Endothelial cell of umbilical vein (primary cell): ENCODE measurements at regions of chr20 and their contacts with region 1.

Region 1: DNA sequence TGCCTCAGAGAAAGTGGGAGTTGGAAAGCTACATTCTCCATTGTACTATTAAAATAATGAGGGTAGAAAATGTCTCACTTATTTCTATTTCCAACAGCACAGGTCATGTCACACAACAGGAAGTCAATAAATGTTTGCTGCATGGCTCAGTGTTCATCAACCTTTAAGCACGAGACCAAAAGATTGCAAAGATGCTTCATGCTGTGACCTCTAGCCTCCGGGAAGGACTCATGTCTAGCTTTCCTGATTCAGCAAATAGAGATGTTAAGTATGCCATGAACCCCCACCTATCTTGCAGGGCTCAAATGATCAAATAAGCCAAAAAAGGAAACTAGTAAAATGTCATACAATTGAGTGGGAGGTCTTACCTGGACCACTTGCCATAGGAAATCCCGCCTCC is 57.4 kb downstream of the NCOA6 start:
- DNase-seq: peak; percentile 14
- H3K4me3 ChIP-seq: no peak overlapping the region
- H3K27ac ChIP-seq: no peak overlapping the region
- H3K4me1 ChIP-seq: peaks cover 12% of the 10 kb centered on the region
- H3K27me3 ChIP-seq: no peaks in the 10 kb centered on the region
- CTCF ChIP-seq: no peak
- POLR2A ChIP-seq: no peak

Region 2: DNA sequence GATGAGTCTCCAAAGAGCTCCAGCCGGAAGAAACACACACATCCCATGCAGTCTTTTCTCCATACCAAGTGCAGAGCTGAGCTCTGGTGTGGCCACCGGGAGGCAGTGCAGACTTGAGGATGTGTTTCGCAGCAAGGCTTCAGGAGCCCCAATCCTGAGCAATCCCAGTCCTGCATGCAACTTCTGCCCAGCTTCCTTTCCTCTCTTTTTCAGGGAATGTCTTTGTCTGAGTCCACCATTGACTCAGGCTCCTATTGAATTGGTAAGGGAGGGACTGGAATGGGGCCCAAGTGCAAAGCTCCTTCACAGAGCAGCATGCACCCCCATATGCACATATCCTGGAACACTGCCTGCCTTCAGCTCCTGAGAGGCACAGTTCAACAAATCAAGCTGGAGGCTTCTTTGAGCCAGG is 577.4 kb before region 1 on chr20:
- CTCF ChIA-PET with region 1: interaction called, 33 read pairs
- POLR2A ChIA-PET with region 1: no interaction called
- dilution Hi-C with region 1: no loop called
- intact Hi-C with region 1: loop called (anchors 10 kb)
- DNase-seq: peak; percentile 82
- H3K4me3 ChIP-seq: no peak overlapping the region
- H3K27ac ChIP-seq: no peak overlapping the region
- H3K4me1 ChIP-seq: no peaks in the 10 kb centered on the region
- H3K27me3 ChIP-seq: peaks cover 37 to 44% of the 10 kb centered on the region in 2 experiments
- CTCF ChIP-seq: peak; percentile 86 to 88
- POLR2A ChIP-seq: no peak

Region 3: GRCh38 chr20:34558320-34559218 is 209.5 kb before region 1 on chr20 and contains the start of gene MAP1LC3A:
- CTCF ChIA-PET with region 1: interaction called, 23 read pairs
- POLR2A ChIA-PET with region 1: no interaction called
- dilution Hi-C with region 1: no loop called
- intact Hi-C with region 1: loop called (anchors 1 kb)
- DNase-seq: peak; percentile 93
- H3K4me3 ChIP-seq: peak within 1 kb of the TSS; percentile 60 to 92 (median 73)
- H3K27ac ChIP-seq: peak within 1 kb of the TSS; percentile 77
- H3K4me1 ChIP-seq: no peaks in the 10 kb centered on the region
- H3K27me3 ChIP-seq: no peaks in the 10 kb centered on the region
- CTCF ChIP-seq: no peak
- POLR2A ChIP-seq: no peak
- total RNA-seq, gene MAP1LC3A: 32.1 and 32.7 TPM in 2 replicates

Region 4: DNA sequence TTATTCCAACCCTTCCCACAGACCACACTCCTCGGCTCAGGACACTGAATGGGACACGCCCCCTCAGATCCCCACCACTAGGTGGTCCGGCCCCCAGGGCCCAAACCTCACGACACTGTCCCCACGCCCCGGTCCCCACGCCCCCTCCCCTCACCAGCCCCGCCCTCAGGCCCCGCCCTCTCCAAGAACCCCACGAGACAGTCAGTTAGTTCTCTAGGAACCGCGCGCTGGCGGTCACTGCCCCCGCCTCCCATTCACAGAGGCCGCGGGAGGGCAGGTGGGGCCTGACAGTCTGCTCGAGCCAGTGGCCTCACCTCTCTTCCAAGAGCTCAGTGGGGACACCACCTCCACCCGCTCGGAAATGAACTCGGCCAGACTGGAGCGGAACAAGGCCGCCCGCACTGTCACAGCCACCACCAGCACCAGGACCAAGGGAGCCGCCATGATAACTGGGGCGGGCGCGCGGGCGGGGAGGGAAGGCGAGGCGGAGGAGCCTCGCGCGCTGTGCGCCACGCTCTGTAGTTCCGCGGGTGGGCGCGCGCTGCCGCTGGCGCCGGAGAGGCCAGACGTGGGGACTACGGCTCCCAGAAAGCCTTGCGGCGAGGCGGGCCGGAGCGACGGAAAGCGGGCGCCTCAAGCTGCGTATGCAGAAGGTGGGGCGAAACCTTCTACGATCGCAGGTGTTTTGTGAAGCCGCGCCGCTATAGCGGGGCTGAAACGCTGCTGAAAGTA is 91.3 kb before region 1 on chr20 and contains the start of gene PIGU:
- CTCF ChIA-PET with region 1: no interaction called
- POLR2A ChIA-PET with region 1: no interaction called
- dilution Hi-C with region 1: no loop called
- intact Hi-C with region 1: no loop called
- DNase-seq: peak; percentile 97
- H3K4me3 ChIP-seq: peak within 1 kb of the TSS; percentile 74 to 86 (median 79)
- H3K27ac ChIP-seq: peak within 1 kb of the TSS; percentile 25
- H3K4me1 ChIP-seq: peaks cover 4% of the 10 kb centered on the region
- H3K27me3 ChIP-seq: no peaks in the 10 kb centered on the region
- CTCF ChIP-seq: peak in 1 of 2 donors; percentile 18
- POLR2A ChIP-seq: peak; percentile 47
- total RNA-seq, gene PIGU: 20.3 and 23.3 TPM in 2 replicates

Region 5: DNA sequence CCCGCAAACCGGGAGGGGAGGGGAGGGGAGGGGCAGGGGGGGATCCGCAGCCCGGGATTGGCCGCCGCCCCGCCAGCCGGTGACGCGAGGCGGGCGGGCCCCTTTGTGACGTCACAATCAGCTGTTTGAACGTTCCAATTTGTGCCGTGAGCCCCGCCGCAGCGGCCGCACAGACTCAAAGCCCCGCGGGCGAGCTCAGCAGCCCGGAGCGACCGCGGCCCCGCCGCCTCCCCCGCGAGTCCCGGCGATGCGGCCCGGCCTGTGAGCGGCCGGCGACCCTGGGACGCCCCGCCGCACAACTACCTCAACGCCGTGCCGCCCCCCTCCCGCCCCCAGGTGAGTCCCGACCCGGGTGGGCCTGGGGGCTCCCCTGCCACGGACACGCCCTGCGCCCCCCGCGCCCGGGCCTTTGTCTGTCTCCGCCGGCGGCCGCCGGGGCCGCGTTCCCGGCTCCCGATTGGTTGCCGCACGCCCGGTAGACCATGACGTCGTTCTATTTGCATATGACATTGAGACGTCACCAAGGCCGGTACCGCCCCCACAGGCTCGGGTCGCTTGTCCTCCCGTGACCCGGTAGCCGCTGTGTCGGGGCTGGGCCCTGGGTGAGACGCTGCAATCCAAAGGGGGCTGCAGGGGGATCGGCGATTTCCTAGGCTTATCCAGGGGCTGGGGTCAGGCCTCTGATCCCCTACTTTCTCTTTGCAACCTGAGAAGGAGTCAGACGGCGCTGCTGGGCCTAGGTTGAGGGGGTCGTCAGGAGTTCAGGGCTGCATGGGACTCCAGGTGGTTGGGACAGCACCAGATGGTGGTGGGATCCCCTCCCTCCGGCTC is 63.7 kb before region 1 on chr20 and contains the start of gene TP53INP2:
- CTCF ChIA-PET with region 1: interaction called, 10 read pairs
- POLR2A ChIA-PET with region 1: no interaction called
- dilution Hi-C with region 1: no loop called
- intact Hi-C with region 1: no loop called
- DNase-seq: peak; percentile 81
- H3K4me3 ChIP-seq: peak within 1 kb of the TSS; percentile 50 to 79 (median 75)
- H3K27ac ChIP-seq: peak within 1 kb of the TSS; percentile 88
- H3K4me1 ChIP-seq: peaks cover 14% of the 10 kb centered on the region
- H3K27me3 ChIP-seq: no peaks in the 10 kb centered on the region
- CTCF ChIP-seq: no peak
- POLR2A ChIP-seq: peak; percentile 81
- total RNA-seq, gene TP53INP2: 30.5 and 36.4 TPM in 2 replicates

Region 6: GRCh38 chr20:34744847-34745246 is 23.2 kb before region 1 on chr20:
- CTCF ChIA-PET with region 1: interaction called, 27 read pairs
- POLR2A ChIA-PET with region 1: no interaction called
- dilution Hi-C with region 1: no loop called
- intact Hi-C with region 1: no loop called
- DNase-seq: no peak
- H3K4me3 ChIP-seq: no peak overlapping the region
- H3K27ac ChIP-seq: no peak overlapping the region
- H3K4me1 ChIP-seq: no peaks in the 10 kb centered on the region
- H3K27me3 ChIP-seq: no peaks in the 10 kb centered on the region
- CTCF ChIP-seq: no peak
- POLR2A ChIP-seq: no peak

Region 7: DNA sequence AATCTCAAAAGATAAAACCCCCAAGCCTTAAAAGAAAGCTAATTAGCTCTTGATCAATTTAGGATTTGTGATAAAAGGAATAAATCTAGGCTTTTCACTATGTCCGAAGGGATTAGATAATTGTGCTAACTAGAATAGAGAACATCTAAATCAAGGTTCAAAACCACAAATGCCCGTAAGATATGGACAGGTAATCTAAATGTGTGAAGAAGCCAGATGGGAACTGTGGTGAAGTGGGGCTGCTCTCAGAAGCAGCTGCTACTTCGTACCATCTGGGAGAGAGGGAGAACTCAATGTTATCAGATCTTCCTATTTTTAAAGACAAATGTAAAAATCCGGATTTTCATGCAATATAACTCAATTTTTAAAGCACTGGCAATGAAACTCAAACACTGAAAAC is 13.1 kb after region 1 on chr20:
- CTCF ChIA-PET with region 1: interaction called, 50 read pairs
- POLR2A ChIA-PET with region 1: no interaction called
- dilution Hi-C with region 1: no loop called
- intact Hi-C with region 1: no loop called
- DNase-seq: no peak
- H3K4me3 ChIP-seq: no peak overlapping the region
- H3K27ac ChIP-seq: no peak overlapping the region
- H3K4me1 ChIP-seq: no peaks in the 10 kb centered on the region
- H3K27me3 ChIP-seq: no peaks in the 10 kb centered on the region
- CTCF ChIP-seq: no peak
- POLR2A ChIP-seq: no peak

Region 8: DNA sequence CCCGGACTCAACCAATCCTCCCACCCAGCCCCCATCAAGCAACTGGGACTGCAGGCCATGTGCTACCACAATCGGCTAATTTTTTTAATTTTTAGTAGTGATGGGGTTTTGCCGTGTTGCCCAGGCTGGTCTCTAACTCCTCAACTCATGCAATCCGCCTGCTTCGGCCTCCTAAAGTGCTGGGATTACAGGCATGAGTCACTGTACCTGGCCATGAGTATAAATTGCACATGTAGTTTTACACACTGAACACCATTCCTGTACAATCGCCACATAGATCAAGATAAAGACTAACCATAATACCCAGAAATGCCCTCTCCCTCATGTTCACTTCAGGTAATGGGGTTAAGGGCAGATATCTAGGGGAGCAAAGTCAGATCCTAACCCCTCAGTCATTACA is 298.1 kb after region 1 on chr20:
- CTCF ChIA-PET with region 1: no interaction called
- POLR2A ChIA-PET with region 1: no interaction called
- dilution Hi-C with region 1: no loop called
- intact Hi-C with region 1: no loop called
- DNase-seq: no peak
- H3K4me3 ChIP-seq: no peak overlapping the region
- H3K27ac ChIP-seq: no peak overlapping the region
- H3K4me1 ChIP-seq: no peaks in the 10 kb centered on the region
- H3K27me3 ChIP-seq: no peaks in the 10 kb centered on the region
- CTCF ChIP-seq: no peak
- POLR2A ChIP-seq: no peak